MCF 10A (cell line): ENCODE measurements at regions of chr7 and their contacts with region 1.

Region 1: DNA sequence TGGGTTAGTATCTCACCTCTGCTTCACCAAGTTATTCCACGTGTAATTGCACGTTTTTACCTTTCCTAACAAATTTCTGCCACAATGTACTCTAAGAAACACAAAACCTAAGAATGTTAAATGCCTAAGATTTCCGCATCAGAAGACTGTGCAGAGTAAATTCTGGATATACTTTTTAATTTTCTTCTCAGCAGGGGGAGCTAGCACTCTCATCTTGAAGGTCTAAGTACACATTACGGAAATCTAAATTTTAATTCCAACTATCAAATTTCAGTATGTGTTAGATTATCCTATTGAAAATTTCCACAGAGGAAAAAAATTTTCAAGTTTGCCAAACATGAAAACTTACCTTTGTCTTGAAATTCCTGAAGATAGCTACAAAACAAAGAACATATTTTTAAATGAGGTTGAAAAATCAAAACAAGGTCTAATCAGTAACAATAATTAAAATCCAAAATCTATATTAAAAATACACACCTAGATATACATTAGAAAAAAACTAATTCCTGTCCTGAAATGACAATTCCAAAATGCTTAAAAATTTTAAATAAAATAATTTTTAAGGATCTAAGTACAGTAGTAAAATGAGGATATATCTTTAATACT is 10.5 kb downstream of the SKAP2 start:
- DNase-seq: peak; percentile 78
- H3K4me3 Mint-ChIP-seq: peak overlapping the region; percentile 17
- H3K27ac Mint-ChIP-seq: peak overlapping the region; percentile 96
- H3K4me1 Mint-ChIP-seq: peaks cover 33% of the 10 kb centered on the region
- H3K27me3 Mint-ChIP-seq: no peaks in the 10 kb centered on the region
- CTCF ChIP-seq: peak; percentile 52

Region 2: DNA sequence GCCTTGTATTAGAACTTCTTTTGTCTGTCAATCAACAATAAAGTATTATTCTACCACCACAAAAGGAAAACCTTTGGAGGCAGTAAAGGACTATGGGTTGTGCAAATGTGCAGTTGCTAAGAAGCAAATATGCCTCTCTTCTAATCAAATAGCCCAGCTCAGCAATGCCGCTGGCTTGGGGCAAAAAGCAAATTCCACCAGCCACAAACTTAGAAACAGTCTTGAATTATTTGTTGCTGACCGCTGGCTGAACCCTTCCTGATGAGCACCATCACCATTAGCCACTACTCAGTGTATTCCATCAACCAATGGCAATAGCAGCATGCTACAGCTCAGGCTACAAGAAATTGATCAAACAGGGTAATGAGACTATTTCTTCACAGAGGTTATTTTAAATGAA is 40.5 kb before region 1 on chr7:
- CTCF ChIA-PET with region 1: no interaction called
- POLR2A ChIA-PET with region 1: no interaction called
- intact Hi-C with region 1: no loop called
- DNase-seq: no peak
- H3K4me3 Mint-ChIP-seq: no peak overlapping the region
- H3K27ac Mint-ChIP-seq: no peak overlapping the region
- H3K4me1 Mint-ChIP-seq: no peaks in the 10 kb centered on the region
- H3K27me3 Mint-ChIP-seq: no peaks in the 10 kb centered on the region
- CTCF ChIP-seq: no peak

Region 3: DNA sequence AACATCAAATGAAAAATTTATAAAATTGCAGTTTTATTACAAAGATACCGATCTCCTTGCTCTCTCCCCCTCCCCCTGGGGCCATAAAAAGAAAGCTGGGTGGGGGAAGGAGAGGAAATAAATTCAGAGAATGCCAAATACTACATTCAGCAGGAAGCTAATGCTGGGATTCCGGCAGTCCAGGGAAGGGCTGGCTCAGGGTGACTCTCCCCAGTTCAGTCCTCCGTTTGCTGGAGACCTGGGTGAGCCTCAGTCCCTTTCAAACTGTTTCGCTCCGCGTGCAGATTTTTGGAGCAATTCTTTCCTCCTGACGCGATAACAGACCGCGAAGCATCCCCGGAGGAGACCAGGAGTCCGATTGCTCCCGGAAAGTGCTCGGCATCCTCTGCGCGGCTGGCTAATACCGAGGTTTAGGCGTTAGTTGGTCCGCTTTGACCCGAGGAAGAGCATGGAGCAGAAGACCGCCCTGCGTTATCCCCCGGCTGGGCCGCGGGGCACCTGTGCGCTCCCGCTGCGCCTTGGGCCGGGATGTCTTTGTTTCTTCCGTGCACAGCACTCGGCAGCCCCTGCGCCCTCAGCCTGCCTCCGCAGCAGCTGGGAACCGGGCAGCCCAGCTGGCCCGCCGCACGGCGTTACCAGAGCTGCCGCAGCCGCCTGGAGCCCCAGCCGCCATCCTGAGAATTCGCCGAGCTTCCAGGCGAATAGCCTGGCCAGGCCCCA is 252.4 kb after region 1 on chr7:
- CTCF ChIA-PET with region 1: interaction called, 198 read pairs
- POLR2A ChIA-PET with region 1: interaction called, 663 read pairs
- intact Hi-C with region 1: no loop called
- DNase-seq: peak; percentile 42
- H3K4me3 Mint-ChIP-seq: peak overlapping the region; percentile 87
- H3K27ac Mint-ChIP-seq: peak overlapping the region; percentile 99
- H3K4me1 Mint-ChIP-seq: peaks cover 38% of the 10 kb centered on the region
- H3K27me3 Mint-ChIP-seq: no peaks in the 10 kb centered on the region
- CTCF ChIP-seq: no peak

Region 4: GRCh38 chr7:27124096-27124901 is 270.4 kb after region 1 on chr7:
- CTCF ChIA-PET with region 1: interaction called, 11 read pairs
- POLR2A ChIA-PET with region 1: interaction called, 395 read pairs
- intact Hi-C with region 1: no loop called
- DNase-seq: no peak
- H3K4me3 Mint-ChIP-seq: peak overlapping the region; percentile 29
- H3K27ac Mint-ChIP-seq: no peak overlapping the region
- H3K4me1 Mint-ChIP-seq: peaks cover 20% of the 10 kb centered on the region
- H3K27me3 Mint-ChIP-seq: no peaks in the 10 kb centered on the region
- CTCF ChIP-seq: no peak

Region 5: GRCh38 chr7:27160546-27161213 is 306.8 kb after region 1 on chr7:
- CTCF ChIA-PET with region 1: interaction called, 15 read pairs
- POLR2A ChIA-PET with region 1: interaction called, 42 read pairs
- intact Hi-C with region 1: no loop called
- DNase-seq: peak; percentile 83
- H3K4me3 Mint-ChIP-seq: peak overlapping the region; percentile 84
- H3K27ac Mint-ChIP-seq: no peak overlapping the region
- H3K4me1 Mint-ChIP-seq: peaks cover 8% of the 10 kb centered on the region
- H3K27me3 Mint-ChIP-seq: no peaks in the 10 kb centered on the region
- CTCF ChIP-seq: peak; percentile 96